ENCODE measurements at regions of chr4 and their contacts with region 1.

Region 1: GRCh38 chr4:7802093-7802726 is 137.5 kb downstream of the AFAP1 start:
- DNase-seq: peak; percentile 90
- ATAC-seq: peak; percentile 95
- H3K4me3 Mint-ChIP-seq: no peak overlapping the region
- H3K27ac Mint-ChIP-seq: peak overlapping the region; percentile 61
- H3K4me1 Mint-ChIP-seq: peaks cover 17% of the 10 kb centered on the region
- H3K27me3 Mint-ChIP-seq: no peaks in the 10 kb centered on the region

Region 2: GRCh38 chr4:7192252-7193029 is 609.8 kb before region 1 on chr4 and contains the start of gene SORCS2:
- CTCF ChIA-PET with region 1: interaction called, 4 read pairs
- POLR2A ChIA-PET with region 1: no interaction called
- intact Hi-C with region 1: loop called (anchors 1 to 5 kb)
- DNase-seq: peak; percentile 74
- ATAC-seq: peak; percentile 85
- H3K4me3 Mint-ChIP-seq: no peak within 1 kb of the TSS
- H3K27ac Mint-ChIP-seq: no peak within 1 kb of the TSS
- H3K4me1 Mint-ChIP-seq: no peaks in the 10 kb centered on the region
- H3K27me3 Mint-ChIP-seq: peaks cover 45% of the 10 kb centered on the region
- total RNA-seq, gene SORCS2: 0.04 TPM in 1 of 2 experiments, not detected in the other

Region 3: DNA sequence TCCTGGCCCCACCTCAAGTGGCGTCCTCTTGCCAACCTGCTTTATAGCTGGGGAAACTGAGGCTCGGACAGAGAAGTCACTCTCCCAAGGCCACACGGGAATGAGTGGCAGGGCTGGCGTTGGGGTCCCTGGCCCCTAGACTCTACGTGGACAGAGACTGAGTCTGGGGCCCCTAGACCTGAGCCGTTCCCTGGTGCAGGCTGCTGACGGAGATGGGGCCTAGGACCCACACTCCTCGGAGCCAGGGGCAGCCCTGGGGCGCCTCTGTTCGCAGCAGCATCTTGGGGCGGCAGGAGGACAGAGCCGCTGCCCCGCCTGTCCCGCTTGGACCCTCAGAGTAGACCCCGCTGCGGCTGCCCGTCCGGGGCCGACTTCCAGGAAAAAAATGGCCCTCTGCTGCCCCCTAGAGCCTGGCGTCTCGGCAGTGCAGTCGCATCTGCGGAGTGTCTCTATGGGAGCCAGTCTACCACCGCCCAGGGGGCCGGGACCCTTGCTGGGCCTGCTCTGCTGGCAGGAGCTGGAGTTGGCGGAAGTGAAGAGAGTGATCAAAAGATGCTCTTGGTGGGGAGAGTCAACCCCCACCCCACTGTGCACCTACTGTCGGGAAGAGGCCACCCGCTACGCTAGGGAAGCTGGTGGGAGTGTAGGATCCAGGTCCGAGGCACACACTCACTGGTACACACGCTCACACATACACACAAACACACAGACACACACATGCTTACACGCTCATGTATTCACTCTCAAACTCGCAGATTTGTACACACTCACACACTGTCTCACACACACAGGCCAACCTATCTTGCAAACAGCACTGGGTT is 82.6 kb before region 1 on chr4:
- CTCF ChIA-PET with region 1: no interaction called
- POLR2A ChIA-PET with region 1: no interaction called
- intact Hi-C with region 1: loop called in 1 of 2 experiments (anchors 1 kb)
- DNase-seq: peak; percentile 82
- ATAC-seq: peak; percentile 82
- H3K4me3 Mint-ChIP-seq: no peak overlapping the region
- H3K27ac Mint-ChIP-seq: no peak overlapping the region
- H3K4me1 Mint-ChIP-seq: no peaks in the 10 kb centered on the region
- H3K27me3 Mint-ChIP-seq: peaks cover 11% of the 10 kb centered on the region

Region 4: DNA sequence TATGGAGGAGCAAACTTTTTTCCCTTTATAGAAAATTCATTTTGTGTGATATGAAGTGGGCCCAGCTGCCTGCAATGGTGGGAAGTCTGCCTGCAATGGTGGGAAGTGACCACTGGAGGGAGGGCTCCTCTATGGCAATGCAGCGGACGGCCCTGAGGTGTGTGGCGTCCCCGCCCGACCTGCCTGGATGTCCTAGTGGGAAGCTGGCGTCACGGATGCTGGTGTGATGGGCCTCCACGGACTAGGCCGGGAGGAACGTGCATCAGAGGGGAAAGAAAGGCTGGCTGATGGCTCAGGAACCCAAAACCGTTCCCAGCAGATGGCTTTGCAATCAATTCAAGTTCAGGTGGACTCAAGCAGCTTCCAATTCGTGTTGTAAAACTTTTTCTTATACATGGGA is 40.5 kb before region 1 on chr4:
- CTCF ChIA-PET with region 1: interaction called, 11 read pairs
- POLR2A ChIA-PET with region 1: no interaction called
- intact Hi-C with region 1: loop called (anchors 1 to 5 kb)
- DNase-seq: peak; percentile 73
- ATAC-seq: peak; percentile 42
- H3K4me3 Mint-ChIP-seq: no peak overlapping the region
- H3K27ac Mint-ChIP-seq: peak overlapping the region; percentile 63
- H3K4me1 Mint-ChIP-seq: peaks cover 31% of the 10 kb centered on the region
- H3K27me3 Mint-ChIP-seq: no peaks in the 10 kb centered on the region

Region 5: DNA sequence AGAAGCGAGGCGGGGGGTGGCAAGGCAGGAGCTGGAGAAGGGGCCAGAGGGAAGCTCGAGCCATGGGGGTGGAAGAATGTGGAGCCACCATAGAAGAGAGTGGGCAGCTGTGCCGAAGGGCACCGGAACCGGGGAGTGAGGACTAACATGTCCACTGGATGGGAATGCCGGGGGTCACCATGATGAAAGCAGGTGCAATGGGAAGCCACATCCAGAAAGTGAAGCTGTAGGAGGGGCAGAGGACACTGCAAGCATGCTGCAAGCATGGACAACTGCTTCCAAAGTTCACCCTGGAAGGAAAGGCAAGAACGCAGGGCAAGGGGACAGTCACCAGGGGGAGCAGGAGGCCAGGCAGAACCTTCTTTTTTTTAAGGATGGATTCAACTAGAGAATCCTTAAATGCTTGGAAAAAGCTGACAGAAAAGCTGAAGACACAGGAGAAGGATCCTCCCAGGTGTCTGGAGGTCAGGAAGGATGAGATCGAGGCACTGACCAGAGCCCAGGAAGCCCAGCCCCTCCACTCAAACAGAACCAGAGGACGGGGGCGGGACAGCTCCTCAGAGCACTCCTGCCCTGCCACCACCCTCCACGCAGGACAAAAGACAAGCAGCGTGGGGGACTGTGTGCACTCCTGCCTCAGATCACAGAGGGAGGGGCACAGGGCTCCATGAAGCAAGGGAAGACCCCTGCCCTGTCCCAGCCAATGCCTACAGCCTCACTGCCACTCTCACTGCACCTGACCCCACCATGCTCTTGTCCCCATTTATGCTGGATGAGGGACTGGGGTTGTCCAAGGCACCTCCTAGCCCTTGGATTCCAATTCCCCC is 31.8 kb before region 1 on chr4:
- CTCF ChIA-PET with region 1: interaction called, 19 read pairs
- POLR2A ChIA-PET with region 1: no interaction called
- intact Hi-C with region 1: loop called in 1 of 2 experiments (anchors 1 kb)
- DNase-seq: peak; percentile 35
- ATAC-seq: peak; percentile 25
- H3K4me3 Mint-ChIP-seq: no peak overlapping the region
- H3K27ac Mint-ChIP-seq: peak overlapping the region; percentile 37
- H3K4me1 Mint-ChIP-seq: peaks cover 20% of the 10 kb centered on the region
- H3K27me3 Mint-ChIP-seq: no peaks in the 10 kb centered on the region

Region 6: DNA sequence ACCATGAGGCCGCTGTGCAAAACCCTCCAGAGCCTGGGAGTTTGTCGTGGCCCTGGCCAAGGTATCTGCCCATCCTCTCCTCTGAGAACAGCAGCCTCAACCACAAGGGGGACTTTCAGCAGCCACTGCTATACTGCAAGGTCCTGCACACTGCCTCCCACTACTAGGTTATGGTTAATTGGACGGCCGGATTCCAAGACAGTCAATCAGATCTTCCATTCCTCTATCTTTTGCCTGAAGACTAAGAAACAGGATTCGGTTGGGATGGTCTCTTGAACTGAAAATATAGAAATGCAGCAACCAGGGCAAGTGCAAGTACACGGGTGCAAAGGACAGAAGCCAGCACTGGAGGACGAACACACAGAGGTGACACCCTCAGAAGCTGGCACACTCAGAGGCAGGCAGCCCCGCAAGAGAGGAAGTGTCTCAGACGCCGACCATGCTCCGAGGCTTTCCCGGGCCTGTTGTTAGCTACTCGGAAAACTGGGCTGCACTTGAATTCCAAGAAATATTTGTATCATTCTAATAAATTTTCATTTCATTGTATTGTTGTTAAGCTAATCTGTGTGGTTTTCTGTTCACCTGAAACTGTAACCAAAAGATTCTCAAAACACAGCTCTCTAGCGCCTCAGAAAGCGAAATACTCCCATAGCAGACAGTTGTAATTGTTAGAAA is 74.1 kb after region 1 on chr4:
- CTCF ChIA-PET with region 1: interaction called, 7 read pairs
- POLR2A ChIA-PET with region 1: no interaction called
- intact Hi-C with region 1: loop called in 1 of 2 experiments (anchors 2 kb)
- DNase-seq: peak; percentile 53
- ATAC-seq: peak; percentile 75
- H3K4me3 Mint-ChIP-seq: peak overlapping the region; percentile 32
- H3K27ac Mint-ChIP-seq: peak overlapping the region; percentile 77
- H3K4me1 Mint-ChIP-seq: peaks cover 40% of the 10 kb centered on the region
- H3K27me3 Mint-ChIP-seq: no peaks in the 10 kb centered on the region

Region 7: DNA sequence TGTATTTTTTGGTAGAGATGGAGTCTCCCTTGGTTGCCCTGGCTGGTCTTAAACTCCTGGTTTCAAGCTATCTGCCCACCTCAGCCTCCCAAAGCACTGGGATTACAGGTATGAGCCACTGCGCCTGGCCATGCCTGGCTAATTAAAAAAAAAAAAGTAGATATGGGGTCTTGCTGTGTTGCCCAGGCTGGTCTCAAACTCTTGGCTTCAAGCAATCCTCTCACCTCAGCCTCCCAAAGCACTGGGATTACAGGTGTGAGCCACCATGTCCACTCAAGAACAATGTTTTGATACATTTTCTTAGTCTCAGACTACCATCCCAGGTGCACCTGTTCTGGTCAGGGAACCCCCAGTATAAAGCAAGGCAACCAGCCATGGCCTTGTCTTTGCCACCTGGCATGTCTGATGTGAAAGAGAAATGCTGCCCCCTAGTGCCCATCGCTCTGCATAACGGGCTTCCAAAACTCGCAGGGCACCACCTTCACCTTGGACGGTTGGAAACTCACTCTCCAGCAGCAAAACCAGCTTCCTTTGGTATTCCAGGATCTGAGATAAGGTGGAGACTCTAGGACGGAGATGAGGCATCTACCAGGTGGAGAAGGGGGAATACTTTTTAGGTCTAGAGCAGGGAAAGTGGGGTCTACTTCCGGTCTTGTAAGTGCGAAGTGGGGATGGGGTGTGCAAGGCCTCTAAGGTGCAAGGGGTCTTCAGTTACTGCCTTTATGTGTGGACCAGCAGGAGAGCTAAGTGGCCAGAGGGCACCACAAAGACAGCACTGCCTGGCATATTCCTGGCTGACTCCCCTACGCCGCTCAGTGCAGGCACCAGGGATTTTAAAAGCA is 185.2 kb after region 1 on chr4:
- CTCF ChIA-PET with region 1: interaction called, 86 read pairs
- POLR2A ChIA-PET with region 1: no interaction called
- intact Hi-C with region 1: loop called (anchors 1 kb)
- DNase-seq: peak; percentile 88
- ATAC-seq: peak; percentile 89
- H3K4me3 Mint-ChIP-seq: no peak overlapping the region
- H3K27ac Mint-ChIP-seq: no peak overlapping the region
- H3K4me1 Mint-ChIP-seq: peaks cover 3% of the 10 kb centered on the region
- H3K27me3 Mint-ChIP-seq: no peaks in the 10 kb centered on the region

Measured in activated CD4-positive, alpha-beta T cell treated with anti-CD3 and anti-CD28 coated beads for 36 hours (primary cell).